Activated naive CD8-positive, alpha-beta T cell treated with anti-CD3 and anti-CD28 coated beads, Interleukin-2, amount 10 ng/mL, durations not matched to agents 7 days and 5 days (primary cell): ENCODE measurements at regions of chr11 and their contacts with region 1.

Region 1: GRCh38 chr11:76770642-76771445 is 12.3 kb upstream of the TSKU start:
- DNase-seq: no peak
- ATAC-seq: no peak
- H3K4me3 Mint-ChIP-seq: peak overlapping the region; percentile 39
- H3K27ac Mint-ChIP-seq: peak overlapping the region; percentile 81
- H3K4me1 Mint-ChIP-seq: peaks cover 48% of the 10 kb centered on the region
- H3K27me3 Mint-ChIP-seq: peaks cover 2% of the 10 kb centered on the region

Region 2: GRCh38 chr11:76752321-76753185 is 18.3 kb before region 1 on chr11:
- POLR2A ChIA-PET with region 1: no interaction called
- DNase-seq: no peak
- ATAC-seq: no peak
- H3K4me3 Mint-ChIP-seq: no peak overlapping the region
- H3K27ac Mint-ChIP-seq: no peak overlapping the region
- H3K4me1 Mint-ChIP-seq: no peaks in the 10 kb centered on the region
- H3K27me3 Mint-ChIP-seq: peaks cover 12% of the 10 kb centered on the region

Region 3: DNA sequence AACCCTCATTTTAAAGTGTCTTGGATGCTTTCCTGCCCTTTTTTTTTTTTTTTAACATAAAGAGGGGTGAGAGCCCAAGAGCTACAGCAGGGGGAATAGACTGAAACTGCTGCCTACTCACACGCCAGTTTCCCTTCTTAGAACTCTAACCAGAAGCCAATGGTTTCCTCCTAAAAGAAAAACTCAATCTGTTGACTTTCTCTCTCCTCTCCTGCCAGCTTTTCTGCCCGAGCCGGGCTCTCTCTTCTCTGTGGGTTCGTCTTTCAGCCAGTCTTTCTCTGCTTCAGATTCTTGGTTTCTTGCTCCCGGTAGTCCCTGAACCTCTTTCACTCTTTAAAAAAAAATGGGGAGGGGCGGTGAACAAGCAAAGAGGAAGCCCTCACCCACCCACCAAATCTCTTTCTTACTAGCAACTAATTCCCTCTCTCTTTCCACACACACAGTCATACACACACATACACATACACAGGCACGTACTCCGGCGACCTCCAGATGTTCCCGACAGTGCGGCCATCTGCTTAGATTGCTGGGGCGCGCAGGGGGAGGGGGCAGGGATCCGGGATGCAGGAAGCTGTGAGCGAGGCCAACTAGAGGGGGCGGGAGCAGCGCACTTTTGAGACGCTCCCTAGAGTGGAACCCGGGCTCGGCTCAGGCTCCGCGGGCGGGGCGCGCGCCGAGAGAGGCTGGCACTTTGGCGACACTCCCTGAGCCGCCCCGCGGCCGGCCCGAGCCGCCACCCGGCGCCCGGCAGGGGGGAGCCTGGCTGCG is 11.9 kb after region 1 on chr11:
- POLR2A ChIA-PET with region 1: interaction called, 11 read pairs
- DNase-seq: peak; percentile 82
- ATAC-seq: peak; percentile 78
- H3K4me3 Mint-ChIP-seq: peak overlapping the region; percentile 97
- H3K27ac Mint-ChIP-seq: peak overlapping the region; percentile 90
- H3K4me1 Mint-ChIP-seq: peaks cover 19% of the 10 kb centered on the region
- H3K27me3 Mint-ChIP-seq: peaks cover 38% of the 10 kb centered on the region

Region 4: DNA sequence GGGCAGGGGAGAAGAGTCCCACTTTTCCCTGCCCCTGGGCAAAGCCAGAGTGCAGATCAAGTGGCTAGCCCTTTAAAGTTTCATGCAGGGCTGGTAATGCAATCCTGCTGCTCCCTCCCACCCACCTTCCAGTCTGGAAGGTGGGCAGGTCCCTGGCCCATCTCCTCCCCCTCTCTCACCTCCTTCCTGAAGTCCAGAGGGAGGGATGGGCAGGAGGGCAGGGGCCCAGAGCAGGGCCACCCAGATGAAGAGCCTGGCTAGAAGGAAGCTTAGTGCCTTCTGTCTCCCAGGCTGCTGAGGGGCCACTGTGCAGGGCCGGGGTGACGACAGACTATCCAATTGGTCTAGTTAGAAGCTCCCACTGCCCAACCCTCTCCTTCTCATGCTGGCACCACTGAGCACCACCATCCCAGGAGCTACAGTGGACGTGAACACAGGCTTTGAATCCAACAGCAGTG is 23.0 kb after region 1 on chr11:
- POLR2A ChIA-PET with region 1: no interaction called
- DNase-seq: no peak
- ATAC-seq: no peak
- H3K4me3 Mint-ChIP-seq: no peak overlapping the region
- H3K27ac Mint-ChIP-seq: no peak overlapping the region
- H3K4me1 Mint-ChIP-seq: peaks cover 3% of the 10 kb centered on the region
- H3K27me3 Mint-ChIP-seq: peaks cover 6% of the 10 kb centered on the region

Region 5: DNA sequence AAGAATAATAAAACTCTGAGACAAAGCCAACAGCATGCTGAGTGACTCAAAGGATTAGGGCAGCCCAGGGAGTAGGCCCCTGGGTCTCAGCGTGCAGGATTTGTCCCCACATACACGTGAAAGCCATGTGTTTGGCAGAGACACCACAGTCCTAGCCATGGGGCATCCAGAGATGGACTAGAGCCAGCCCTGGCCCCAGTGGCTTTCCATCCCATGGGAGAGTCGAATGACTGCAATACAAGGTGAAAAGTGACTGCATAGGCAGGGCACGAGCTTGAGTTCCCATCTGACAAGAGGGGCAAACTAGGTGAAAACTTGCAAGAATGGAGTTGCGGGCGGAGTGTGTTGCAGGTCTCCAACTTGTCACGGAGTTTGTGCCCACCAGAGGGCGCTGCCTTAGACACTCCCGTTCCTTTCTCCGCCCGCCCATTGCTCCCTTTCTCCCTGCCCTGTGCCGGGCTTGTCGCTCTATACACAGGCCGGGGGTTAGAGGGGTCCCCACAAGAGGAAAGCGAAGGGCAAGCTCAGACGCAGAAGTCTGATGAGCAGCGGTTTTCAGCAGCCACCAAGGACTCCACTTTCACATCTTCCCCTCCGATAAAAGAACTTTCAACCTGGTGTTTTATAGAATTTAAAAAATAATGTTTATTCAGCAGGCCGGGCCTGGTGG is 36.5 kb after region 1 on chr11:
- POLR2A ChIA-PET with region 1: no interaction called
- DNase-seq: peak; percentile 78
- ATAC-seq: peak; percentile 53
- H3K4me3 Mint-ChIP-seq: no peak overlapping the region
- H3K27ac Mint-ChIP-seq: no peak overlapping the region
- H3K4me1 Mint-ChIP-seq: peaks cover 39% of the 10 kb centered on the region
- H3K27me3 Mint-ChIP-seq: peaks cover 20% of the 10 kb centered on the region

Region 6: DNA sequence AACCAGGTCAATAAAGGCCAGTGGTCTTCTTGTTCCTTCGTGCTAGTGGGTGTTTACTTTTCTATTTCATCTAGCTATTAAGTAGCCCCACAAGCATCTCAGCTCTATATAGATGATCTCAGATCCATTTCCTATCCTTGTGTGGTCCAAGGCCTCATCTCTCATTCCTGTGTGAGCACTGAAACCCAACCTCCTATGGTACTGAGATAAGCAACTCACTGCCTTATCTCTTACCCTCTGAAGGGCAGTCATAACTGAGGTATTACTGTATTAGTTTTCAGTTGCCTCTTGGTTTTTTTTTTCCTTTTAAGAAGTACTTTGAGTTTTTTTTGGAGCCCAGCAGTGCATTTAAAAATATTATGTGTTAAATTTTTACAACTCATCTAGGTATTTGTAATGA is 118.1 kb after region 1 on chr11:
- POLR2A ChIA-PET with region 1: no interaction called
- DNase-seq: no peak
- ATAC-seq: no peak
- H3K4me3 Mint-ChIP-seq: no peak overlapping the region
- H3K27ac Mint-ChIP-seq: no peak overlapping the region
- H3K4me1 Mint-ChIP-seq: peaks cover 10% of the 10 kb centered on the region
- H3K27me3 Mint-ChIP-seq: no peaks in the 10 kb centered on the region